Cardiac septum (tissue), 1 donor: ENCODE measurements at regions of chrX and their contacts with region 1.

Region 1: DNA sequence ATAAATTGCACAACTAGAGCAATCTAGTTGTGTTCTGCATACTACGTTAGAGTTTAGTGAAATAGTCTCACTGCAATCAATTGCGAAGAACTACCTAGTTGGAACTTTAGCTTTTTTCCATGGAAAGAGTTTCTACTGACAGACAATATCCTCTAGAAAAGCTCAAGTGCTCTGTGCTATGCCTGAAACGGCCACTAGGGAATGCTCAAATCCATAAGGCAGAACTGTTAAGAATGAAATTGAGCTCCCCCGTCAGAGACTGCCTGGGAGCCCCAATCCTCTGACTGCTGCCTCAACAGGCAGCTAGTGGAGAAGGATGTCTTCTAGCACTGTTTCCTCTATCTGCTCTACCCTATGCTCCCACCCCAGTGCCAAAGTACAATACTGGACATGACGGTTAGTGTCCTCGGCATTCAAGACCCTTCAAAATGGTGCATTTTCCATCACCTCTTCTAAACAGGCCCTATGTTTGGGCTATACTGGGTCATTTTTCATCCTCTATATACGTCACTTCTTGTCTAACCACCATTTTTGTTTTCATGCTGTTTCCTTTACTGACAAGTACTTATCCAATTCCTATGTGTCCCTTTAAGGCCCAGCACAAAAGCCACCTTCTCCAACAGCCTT is 35.3 kb downstream of the FRMD7 start:
- DNase-seq: no peak

Region 2: DNA sequence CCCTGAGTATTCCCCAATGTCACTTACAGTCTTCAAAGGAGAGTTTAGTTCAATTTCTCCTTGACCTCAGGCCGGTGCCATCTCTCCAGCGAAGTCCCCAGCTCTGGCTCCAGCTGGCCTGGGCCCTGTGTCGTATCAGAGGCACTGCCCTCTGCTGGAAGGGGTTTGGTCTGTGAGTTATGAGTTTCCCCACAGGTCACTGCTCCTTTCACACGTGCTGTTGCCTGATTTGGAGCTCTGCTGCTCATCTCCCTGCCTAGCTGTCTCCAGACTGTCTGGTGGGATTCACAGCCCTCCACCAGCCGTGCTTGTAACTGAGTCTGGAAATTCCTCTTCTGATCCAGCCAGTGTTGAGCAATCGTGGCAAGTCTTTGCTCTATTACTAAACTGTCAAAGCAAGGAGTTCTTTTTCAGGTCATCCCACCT is 126.8 kb after region 1 on chrX and contains the start of gene RAP2C:
- intact Hi-C with region 1: loop called (anchors 10 kb)
- DNase-seq: peak; percentile 86
- total RNA-seq, gene RAP2C: 19.1 TPM